ENCODE measurements at regions of chr6 and their contacts with region 1.

Region 1: GRCh38 chr6:41591859-41592502 is 45.8 kb downstream of the FOXP4 start:
- DNase-seq: peak; percentile 57 to 95 (median 87)

Region 2: GRCh38 chr6:41367700-41368099 is 224.3 kb before region 1 on chr6:
- intact Hi-C with region 1: loop called (anchors 1 kb)
- DNase-seq: peak; percentile 56 to 96 (median 78)

Region 3: GRCh38 chr6:41424370-41425058 is 167.5 kb before region 1 on chr6:
- intact Hi-C with region 1: loop called (anchors 1 kb)
- DNase-seq: peak; percentile 61 to 96 (median 88)

Region 4: GRCh38 chr6:41463062-41463930 is 128.7 kb before region 1 on chr6:
- intact Hi-C with region 1: loop called (anchors 2 kb)
- DNase-seq: peak in 6 of 10 donors; percentile 29 to 94 (median 59)

Region 5: GRCh38 chr6:41545703-41546474 is 46.1 kb before region 1 on chr6 and contains the start of gene FOXP4:
- intact Hi-C with region 1: loop called (anchors 5 kb)
- DNase-seq: peak; percentile 78 to 98 (median 88)